ENCODE measurements at regions of chr4 and their contacts with region 1.

Region 1: GRCh38 chr4:80365928-80366327 is 30.4 kb downstream of the CFAP299 start:
- DNase-seq: no peak
- H3K4me3 ChIP-seq: no peak overlapping the region
- H3K27ac ChIP-seq: no peak overlapping the region
- H3K4me1 ChIP-seq: no peaks in the 10 kb centered on the region
- H3K27me3 ChIP-seq: peaks cover 0 to 3% (median 0%) of the 10 kb centered on the region in 7 donors
- CTCF ChIP-seq: peak; percentile 19 to 69 (median 55)
- POLR2A ChIP-seq: no peak

Region 2: DNA sequence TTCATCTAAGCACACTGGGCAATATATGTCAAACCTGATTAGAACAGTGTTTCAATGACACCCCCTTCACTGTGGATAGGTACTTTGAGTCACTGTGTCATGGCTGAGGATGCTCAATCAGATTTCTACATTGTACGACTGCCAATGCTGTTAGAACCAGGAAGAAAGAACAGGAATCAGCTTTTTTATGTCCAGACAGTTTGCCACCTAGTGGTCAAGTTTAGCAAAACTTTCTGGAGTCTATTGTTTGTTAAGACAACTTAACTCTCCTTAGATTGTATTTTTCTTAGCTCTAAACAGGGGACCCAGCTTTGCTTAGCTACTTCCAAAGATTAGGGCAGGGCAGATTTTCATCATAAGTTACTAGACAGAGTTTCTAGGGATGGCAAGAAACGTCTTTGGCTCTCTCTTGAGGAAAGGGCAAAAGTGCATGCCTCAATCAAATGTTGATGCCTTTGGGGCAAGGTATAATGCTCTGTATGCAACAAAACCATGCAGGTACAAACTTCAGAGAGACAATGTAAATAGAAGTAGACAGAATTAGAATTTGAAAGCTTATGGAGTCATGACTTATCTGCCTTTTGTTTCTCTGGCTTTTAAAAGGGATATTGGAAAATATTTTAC is 624.1 kb after region 1 on chr4:
- intact Hi-C with region 1: loop called (anchors 5 kb)
- DNase-seq: no peak
- H3K4me3 ChIP-seq: no peak overlapping the region
- H3K27ac ChIP-seq: no peak overlapping the region
- H3K4me1 ChIP-seq: no peaks in the 10 kb centered on the region
- H3K27me3 ChIP-seq: no peaks in the 10 kb centered on the region
- CTCF ChIP-seq: peak in 9 of 11 experiments; percentile 21 to 72 (median 65)
- POLR2A ChIP-seq: no peak

Region 3: DNA sequence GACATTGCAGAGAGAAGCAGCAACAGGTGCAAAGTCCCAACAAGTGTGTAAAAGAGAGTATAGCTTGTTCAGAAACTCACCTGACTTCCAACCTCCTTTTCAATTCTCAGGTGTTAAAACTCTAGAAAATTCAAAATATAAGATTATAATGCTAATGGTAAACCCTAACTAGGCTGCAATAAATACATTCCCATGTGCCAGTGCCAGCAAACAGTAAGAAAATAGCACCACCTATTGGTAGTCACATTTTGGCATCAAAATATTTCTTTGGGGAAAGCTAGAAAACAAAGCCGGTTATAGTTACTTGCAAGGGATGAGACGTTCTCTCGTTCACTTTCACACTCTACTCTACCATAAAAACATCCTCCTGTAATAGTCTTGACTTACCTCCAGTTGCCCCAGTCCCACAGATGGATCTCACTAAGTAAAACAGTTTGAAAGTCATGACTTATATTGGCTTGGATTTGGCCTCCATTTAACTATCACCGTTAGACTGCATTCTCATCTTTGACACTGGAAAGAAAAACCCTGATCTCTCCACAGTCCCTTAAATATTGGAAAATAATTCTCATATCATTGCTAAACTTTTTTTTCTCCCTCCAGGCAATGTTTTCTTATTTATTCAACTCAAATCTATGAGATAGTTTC is 674.2 kb after region 1 on chr4:
- intact Hi-C with region 1: loop called (anchors 5 kb)
- DNase-seq: no peak
- H3K4me3 ChIP-seq: no peak overlapping the region
- H3K27ac ChIP-seq: no peak overlapping the region
- H3K4me1 ChIP-seq: peaks cover 0 to 8% (median 0%) of the 10 kb centered on the region in 6 donors
- H3K27me3 ChIP-seq: peaks cover 0 to 13% (median 0%) of the 10 kb centered on the region in 7 donors
- CTCF ChIP-seq: peak in 9 of 11 experiments; percentile 14 to 57 (median 44)
- POLR2A ChIP-seq: no peak